ENCODE measurements at regions of chr5 and their contacts with region 1.

Region 1: GRCh38 chr5:68215208-68215897 is at the start of gene PIK3R1:
- DNase-seq: peak; percentile 97
- ATAC-seq: peak; percentile 84
- H3K4me3 ChIP-seq: peak within 1 kb of the TSS; percentile 76 to 94 (median 88)
- H3K4me3 Mint-ChIP-seq: peak within 1 kb of the TSS; percentile 85
- H3K27ac ChIP-seq: peak within 1 kb of the TSS; percentile 90 to 92
- H3K27ac Mint-ChIP-seq: peak within 1 kb of the TSS; percentile 98
- H3K4me1 ChIP-seq: peaks cover 22 to 24% of the 10 kb centered on the region in 2 donors
- H3K4me1 Mint-ChIP-seq: peaks cover 44% of the 10 kb centered on the region
- H3K27me3 ChIP-seq: no peaks in the 10 kb centered on the region
- H3K27me3 Mint-ChIP-seq: no peaks in the 10 kb centered on the region
- CTCF ChIP-seq: peak; percentile 40
- total RNA-seq, gene PIK3R1: 63.8 and 73.3 TPM in 2 replicates

Region 2: GRCh38 chr5:67196537-67197059 is 1018.8 kb before region 1 on chr5 and contains the start of gene CD180:
- CTCF ChIA-PET with region 1: interaction called, 3 read pairs
- POLR2A ChIA-PET with region 1: interaction called, 4 read pairs
- intact Hi-C with region 1: loop called (anchors 10 kb)
- DNase-seq: peak; percentile 65
- ATAC-seq: peak; percentile 54
- H3K4me3 ChIP-seq: peak within 1 kb of the TSS; percentile 63 to 95 (median 74)
- H3K4me3 Mint-ChIP-seq: peak within 1 kb of the TSS; percentile 91
- H3K27ac ChIP-seq: peak within 1 kb of the TSS; percentile 87 to 98
- H3K27ac Mint-ChIP-seq: peak within 1 kb of the TSS; percentile 97
- H3K4me1 ChIP-seq: peaks cover 60 to 76% of the 10 kb centered on the region in 2 donors
- H3K4me1 Mint-ChIP-seq: peaks cover 96% of the 10 kb centered on the region
- H3K27me3 ChIP-seq: no peaks in the 10 kb centered on the region
- H3K27me3 Mint-ChIP-seq: no peaks in the 10 kb centered on the region
- CTCF ChIP-seq: no peak
- total RNA-seq, gene CD180: 16.4 and 18.0 TPM in 2 replicates

Region 3: GRCh38 chr5:68041293-68041692 is 174.1 kb before region 1 on chr5:
- CTCF ChIA-PET with region 1: no interaction called
- POLR2A ChIA-PET with region 1: interaction called, 4 read pairs
- intact Hi-C with region 1: loop called (anchors 10 kb)
- DNase-seq: peak; percentile 61
- ATAC-seq: peak; percentile 81
- H3K4me3 ChIP-seq: peak overlapping the region in 2 of 5 experiments; percentile 8 to 41
- H3K4me3 Mint-ChIP-seq: peak overlapping the region; percentile 82
- H3K27ac ChIP-seq: peak overlapping the region; percentile 56 to 82
- H3K27ac Mint-ChIP-seq: peak overlapping the region; percentile 93
- H3K4me1 ChIP-seq: peaks cover 30 to 32% of the 10 kb centered on the region in 2 donors
- H3K4me1 Mint-ChIP-seq: peaks cover 32% of the 10 kb centered on the region
- H3K27me3 ChIP-seq: no peaks in the 10 kb centered on the region
- H3K27me3 Mint-ChIP-seq: no peaks in the 10 kb centered on the region
- CTCF ChIP-seq: no peak

Region 4: GRCh38 chr5:68196876-68197275 is 18.5 kb before region 1 on chr5:
- CTCF ChIA-PET with region 1: interaction called, 9 read pairs
- POLR2A ChIA-PET with region 1: interaction called, 4 read pairs
- intact Hi-C with region 1: loop called (anchors 1 kb)
- DNase-seq: peak; percentile 87
- ATAC-seq: peak; percentile 100
- H3K4me3 ChIP-seq: no peak overlapping the region
- H3K4me3 Mint-ChIP-seq: peak overlapping the region; percentile 13
- H3K27ac ChIP-seq: peak overlapping the region; percentile 12 to 77
- H3K27ac Mint-ChIP-seq: peak overlapping the region; percentile 77
- H3K4me1 ChIP-seq: peaks cover 20 to 26% of the 10 kb centered on the region in 2 donors
- H3K4me1 Mint-ChIP-seq: peaks cover 39% of the 10 kb centered on the region
- H3K27me3 ChIP-seq: no peaks in the 10 kb centered on the region
- H3K27me3 Mint-ChIP-seq: no peaks in the 10 kb centered on the region
- CTCF ChIP-seq: no peak

Region 5: DNA sequence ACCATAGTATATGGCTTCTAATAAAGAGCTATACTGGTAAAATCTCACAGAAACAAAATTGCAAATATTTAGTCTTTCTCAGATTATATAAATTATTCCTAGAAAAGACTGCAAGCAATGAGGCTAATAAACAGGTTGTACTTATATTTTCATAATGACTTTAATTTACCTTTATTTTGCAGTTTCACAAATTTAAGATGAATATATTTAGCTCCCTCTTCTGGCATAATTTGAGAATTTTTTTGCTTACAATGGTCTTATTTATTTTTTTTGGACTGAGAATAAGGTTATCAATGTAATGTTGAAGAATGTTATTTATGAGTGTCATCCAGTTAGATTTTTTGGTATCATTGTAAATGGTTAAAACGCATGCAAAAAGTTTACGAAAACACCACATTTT is 56.9 kb after region 1 on chr5:
- CTCF ChIA-PET with region 1: interaction called, 10 read pairs
- POLR2A ChIA-PET with region 1: interaction called, 3 read pairs
- intact Hi-C with region 1: no loop called
- DNase-seq: peak; percentile 34
- ATAC-seq: no peak
- H3K4me3 ChIP-seq: no peak overlapping the region
- H3K4me3 Mint-ChIP-seq: no peak overlapping the region
- H3K27ac ChIP-seq: no peak overlapping the region
- H3K27ac Mint-ChIP-seq: no peak overlapping the region
- H3K4me1 ChIP-seq: peaks cover 14 to 22% of the 10 kb centered on the region in 2 donors
- H3K4me1 Mint-ChIP-seq: peaks cover 32% of the 10 kb centered on the region
- H3K27me3 ChIP-seq: no peaks in the 10 kb centered on the region
- H3K27me3 Mint-ChIP-seq: no peaks in the 10 kb centered on the region
- CTCF ChIP-seq: peak; percentile 67

Region 6: GRCh38 chr5:69166686-69167492 is 951.5 kb after region 1 on chr5 and contains the start of gene CCNB1:
- CTCF ChIA-PET with region 1: no interaction called
- POLR2A ChIA-PET with region 1: no interaction called
- intact Hi-C with region 1: loop called (anchors 5 kb)
- DNase-seq: peak; percentile 97
- ATAC-seq: peak; percentile 100
- H3K4me3 ChIP-seq: peak within 1 kb of the TSS; percentile 32 to 89 (median 84)
- H3K4me3 Mint-ChIP-seq: peak within 1 kb of the TSS; percentile 97
- H3K27ac ChIP-seq: peak within 1 kb of the TSS; percentile 55 to 74
- H3K27ac Mint-ChIP-seq: peak within 1 kb of the TSS; percentile 95
- H3K4me1 ChIP-seq: peaks cover 10 to 17% of the 10 kb centered on the region in 2 donors
- H3K4me1 Mint-ChIP-seq: peaks cover 22% of the 10 kb centered on the region
- H3K27me3 ChIP-seq: no peaks in the 10 kb centered on the region
- H3K27me3 Mint-ChIP-seq: no peaks in the 10 kb centered on the region
- CTCF ChIP-seq: no peak
- total RNA-seq, gene CCNB1: 8.5 and 8.6 TPM in 2 replicates

Measured in B cell (primary cell).